Right lobe of liver (tissue), 6 donors: ENCODE measurements at regions of chr6 and their contacts with region 1.

Region 1: GRCh38 chr6:138588805-138589434 is 89.6 kb upstream of the NHSL1 start:
- DNase-seq: no peak
- ATAC-seq: peak; percentile 53 to 70 (median 63)
- H3K4me3 ChIP-seq: no peak overlapping the region
- H3K27ac ChIP-seq: no peak overlapping the region
- H3K4me1 ChIP-seq: peaks cover 0 to 22% (median 8%) of the 10 kb centered on the region in 4 donors
- H3K27me3 ChIP-seq: no peaks in the 10 kb centered on the region
- CTCF ChIP-seq: peak; percentile 89 to 94 (median 92)
- POLR2A ChIP-seq: no peak

Region 2: DNA sequence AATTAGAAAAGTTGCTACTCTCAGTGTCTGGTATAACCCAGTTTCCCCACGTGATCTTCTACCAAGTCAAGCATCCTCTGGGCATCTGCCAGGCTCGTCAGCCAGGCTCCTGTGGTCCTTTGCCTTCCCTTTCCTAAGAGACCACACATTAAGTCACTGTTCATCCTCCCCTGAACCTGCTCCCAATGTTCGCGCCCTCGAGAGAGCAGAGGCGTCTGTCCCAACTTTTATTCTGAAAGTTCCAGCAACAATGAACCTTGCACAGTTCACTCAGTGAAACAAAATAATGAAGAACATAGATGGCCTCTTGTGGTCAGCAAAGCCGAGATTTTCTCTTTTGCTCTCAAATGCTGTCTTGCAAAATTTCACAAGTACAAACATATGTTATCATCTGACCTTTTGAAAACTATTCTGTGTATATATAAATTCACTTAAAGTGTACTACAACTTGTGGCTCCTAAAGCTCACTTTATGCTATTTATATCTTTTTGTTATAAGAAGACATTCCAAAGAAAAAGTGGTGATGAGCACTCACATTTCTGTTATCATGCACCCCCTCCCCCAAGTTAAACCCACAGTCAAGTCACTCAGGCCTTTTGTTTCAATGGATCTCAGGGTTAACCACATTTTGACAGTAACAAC is 50.4 kb before region 1 on chr6:
- intact Hi-C with region 1: no loop called
- DNase-seq: peak; percentile 36 to 63 (median 62)
- ATAC-seq: peak; percentile 64 to 81 (median 77)
- H3K4me3 ChIP-seq: peak overlapping the region in 1 of 3 donors; percentile 1
- H3K27ac ChIP-seq: peak overlapping the region; percentile 18 to 68 (median 60)
- H3K4me1 ChIP-seq: peaks cover 0 to 24% (median 5%) of the 10 kb centered on the region in 4 donors
- H3K27me3 ChIP-seq: no peaks in the 10 kb centered on the region
- CTCF ChIP-seq: no peak
- POLR2A ChIP-seq: no peak

Region 3: DNA sequence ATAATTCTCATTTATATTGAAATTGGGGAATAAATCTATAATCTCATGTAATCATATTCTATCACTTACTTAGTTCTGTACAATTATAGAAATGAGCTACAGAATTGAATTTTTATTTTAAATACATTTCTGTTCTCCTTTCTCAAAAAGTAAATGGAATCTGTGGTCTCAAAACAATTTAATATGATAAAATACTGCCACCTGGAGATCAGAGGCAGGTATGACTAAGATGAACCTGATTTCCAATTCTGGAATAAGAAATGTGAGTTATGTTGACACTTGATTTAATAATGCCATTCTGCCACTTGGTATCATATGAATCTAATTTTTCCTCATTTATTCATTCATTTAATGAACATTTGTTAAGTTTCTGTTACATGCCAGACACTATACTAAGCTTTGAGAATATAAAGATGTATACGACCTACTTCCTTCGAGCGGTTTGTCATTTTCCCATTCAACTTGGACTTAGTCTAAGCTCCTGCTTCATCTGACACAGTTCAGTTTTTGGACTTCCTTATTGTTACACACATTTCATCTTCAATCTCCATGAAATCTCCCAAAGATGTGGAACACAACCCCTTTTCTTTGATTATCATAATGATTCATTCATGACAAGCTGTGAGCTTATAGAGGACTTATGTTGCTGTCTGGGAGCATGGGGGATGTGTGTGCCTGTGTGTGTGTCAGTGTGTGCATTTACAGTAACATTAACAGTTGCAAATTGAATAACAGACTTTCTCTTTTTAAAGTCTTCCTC is 177.2 kb after region 1 on chr6:
- intact Hi-C with region 1: loop called in 1 of 2 experiments (anchors 10 kb)
- DNase-seq: no peak
- ATAC-seq: peak; percentile 54 to 77 (median 70)
- H3K4me3 ChIP-seq: no peak overlapping the region
- H3K27ac ChIP-seq: no peak overlapping the region
- H3K4me1 ChIP-seq: no peaks in the 10 kb centered on the region
- H3K27me3 ChIP-seq: no peaks in the 10 kb centered on the region
- CTCF ChIP-seq: peak; percentile 64 to 79 (median 70)
- POLR2A ChIP-seq: no peak